ENCODE measurements at regions of chr19 and their contacts with region 1.

Region 1: GRCh38 chr19:21812450-21812849 is 23.5 kb downstream of the ZNF43 start:
- DNase-seq: no peak
- H3K4me3 ChIP-seq: no peak overlapping the region
- H3K27ac ChIP-seq: no peak overlapping the region
- H3K4me1 ChIP-seq: no peaks in the 10 kb centered on the region
- H3K27me3 ChIP-seq: no peaks in the 10 kb centered on the region
- CTCF ChIP-seq: no peak

Region 2: GRCh38 chr19:21492947-21493906 is 319.2 kb before region 1 on chr19:
- CTCF ChIA-PET with region 1: no interaction called
- POLR2A ChIA-PET with region 1: interaction called, 17 read pairs
- intact Hi-C with region 1: no loop called
- DNase-seq: peak in 1 of 2 experiments; percentile 49
- H3K4me3 ChIP-seq: no peak overlapping the region
- H3K27ac ChIP-seq: no peak overlapping the region
- H3K4me1 ChIP-seq: no peaks in the 10 kb centered on the region
- H3K27me3 ChIP-seq: no peaks in the 10 kb centered on the region
- CTCF ChIP-seq: no peak

Measured in PC-9 (cell line).